ENCODE measurements at regions of chr5 and their contacts with region 1.

Region 1: GRCh38 chr5:82364497-82364896 is 86.3 kb upstream of the RPS23 start:
- DNase-seq: no peak
- H3K27ac ChIP-seq: no peak overlapping the region
- CTCF ChIP-seq: no peak

Region 2: DNA sequence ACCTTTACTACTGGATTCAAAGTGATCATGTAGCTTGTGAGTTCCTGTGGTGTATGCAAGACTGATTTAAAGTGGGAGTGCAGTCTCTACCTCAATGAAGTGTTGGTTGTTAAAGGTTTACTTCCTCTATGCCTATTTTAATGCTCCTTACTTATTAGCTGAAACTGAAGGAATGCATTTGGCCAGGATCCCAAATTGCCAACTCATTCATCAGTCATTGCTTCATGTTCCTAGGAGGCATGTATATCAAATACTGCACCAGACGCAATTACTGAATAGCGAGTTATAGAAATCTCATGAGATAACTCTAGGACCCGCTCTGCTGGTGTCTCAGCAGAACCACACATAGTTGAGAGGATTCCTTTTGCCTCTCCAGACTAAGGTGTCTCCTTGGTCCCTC is 56.6 kb after region 1 on chr5:
- CTCF ChIA-PET with region 1: interaction called, 15 read pairs
- POLR2A ChIA-PET with region 1: no interaction called
- DNase-seq: peak; percentile 97
- H3K27ac ChIP-seq: peak overlapping the region; percentile 61; the same call in 1 of the 2 replicates
- CTCF ChIP-seq: no peak; the same call in 1 of the 2 replicates

Region 3: GRCh38 chr5:82487131-82487530 is 122.6 kb after region 1 on chr5:
- CTCF ChIA-PET with region 1: no interaction called
- POLR2A ChIA-PET with region 1: no interaction called
- DNase-seq: no peak
- H3K27ac ChIP-seq: no peak overlapping the region
- CTCF ChIP-seq: no peak